Heart left ventricle (tissue), 16 donors: ENCODE measurements at regions of chr13 and their contacts with region 1.

Region 1: GRCh38 chr13:32381539-32381938 is 46.4 kb downstream of the N4BP2L1 start:
- DNase-seq: no peak
- ATAC-seq: peak in 3 of 4 donors; percentile 54 to 62 (median 62)
- H3K4me3 ChIP-seq: no peak overlapping the region
- H3K27ac ChIP-seq: no peak overlapping the region
- H3K4me1 ChIP-seq: no peaks in the 10 kb centered on the region
- H3K27me3 ChIP-seq: no peaks in the 10 kb centered on the region
- CTCF ChIP-seq: peak; percentile 27 to 68 (median 57)
- POLR2A ChIP-seq: no peak

Region 2: GRCh38 chr13:32362574-32362973 is 19.0 kb before region 1 on chr13:
- intact Hi-C with region 1: no loop called
- DNase-seq: no peak
- ATAC-seq: no peak
- H3K4me3 ChIP-seq: no peak overlapping the region
- H3K27ac ChIP-seq: no peak overlapping the region
- H3K4me1 ChIP-seq: no peaks in the 10 kb centered on the region
- H3K27me3 ChIP-seq: no peaks in the 10 kb centered on the region
- CTCF ChIP-seq: no peak
- POLR2A ChIP-seq: no peak

Region 3: DNA sequence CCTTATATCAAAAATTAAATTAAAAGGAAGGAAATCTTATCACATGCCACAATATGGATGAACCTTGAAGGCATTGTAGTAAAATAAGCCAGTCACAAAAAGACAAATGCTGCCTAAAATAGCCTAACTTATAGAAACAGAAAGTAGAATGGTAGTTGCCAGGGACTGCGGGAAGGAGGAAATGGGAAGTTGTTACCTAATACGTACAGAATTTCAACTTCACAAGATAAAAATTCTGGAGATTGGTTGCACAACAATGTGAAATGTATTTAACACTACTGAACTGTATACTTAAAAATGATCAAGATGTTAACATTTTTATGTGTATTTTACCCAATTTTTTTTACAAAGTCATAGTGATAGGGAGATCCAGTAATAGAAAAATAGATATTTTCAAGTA is 167.3 kb after region 1 on chr13:
- intact Hi-C with region 1: loop called in 1 of 10 experiments (anchors 10 kb)
- DNase-seq: no peak
- ATAC-seq: no peak
- H3K4me3 ChIP-seq: no peak overlapping the region
- H3K27ac ChIP-seq: peak overlapping the region in 1 of 12 donors; percentile 12
- H3K4me1 ChIP-seq: peaks cover 0 to 6% (median 0%) of the 10 kb centered on the region in 12 donors
- H3K27me3 ChIP-seq: no peaks in the 10 kb centered on the region
- CTCF ChIP-seq: no peak
- POLR2A ChIP-seq: no peak

Region 4: GRCh38 chr13:32581177-32581786 is 199.7 kb after region 1 on chr13:
- intact Hi-C with region 1: loop called (anchors 1 to 5 kb)
- DNase-seq: no peak
- ATAC-seq: no peak
- H3K4me3 ChIP-seq: no peak overlapping the region
- H3K27ac ChIP-seq: no peak overlapping the region
- H3K4me1 ChIP-seq: peaks cover 0 to 7% (median 4%) of the 10 kb centered on the region in 12 donors
- H3K27me3 ChIP-seq: no peaks in the 10 kb centered on the region
- CTCF ChIP-seq: peak; percentile 27 to 71 (median 60)
- POLR2A ChIP-seq: no peak

Region 5: DNA sequence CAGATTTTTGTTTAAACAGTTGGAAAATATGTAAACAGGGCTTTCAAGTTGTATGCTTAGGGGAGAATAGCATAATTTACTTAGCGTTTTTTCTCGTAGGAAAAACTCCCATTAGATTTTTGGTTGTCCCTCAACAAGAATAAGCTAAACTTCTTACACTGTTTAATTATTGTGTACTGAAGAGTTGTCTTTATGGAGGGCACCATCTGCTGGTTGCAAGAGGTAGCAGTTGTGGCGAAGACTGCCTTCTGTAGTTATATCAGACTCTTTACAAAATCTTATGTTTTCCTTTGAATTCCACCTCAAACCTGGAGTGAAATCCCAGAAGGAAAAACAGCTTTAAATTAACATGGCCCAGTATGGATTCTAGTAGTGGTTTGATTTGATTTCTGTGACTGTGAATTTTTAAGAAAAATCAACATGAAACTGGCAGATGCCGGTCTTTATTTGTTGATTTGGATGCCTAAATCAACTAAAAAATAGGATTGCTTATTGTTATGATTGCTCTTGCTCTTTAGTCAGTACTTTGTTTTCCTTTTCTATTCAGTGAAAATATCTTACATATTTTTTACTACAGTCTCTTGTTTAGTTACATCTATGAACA is 258.1 kb after region 1 on chr13:
- intact Hi-C with region 1: loop called in 4 of 10 experiments (anchors 5 to 10 kb)
- DNase-seq: peak in 4 of 5 donors; percentile 43 to 58 (median 48)
- ATAC-seq: peak in 3 of 4 donors; percentile 80 to 91 (median 86)
- H3K4me3 ChIP-seq: no peak overlapping the region
- H3K27ac ChIP-seq: no peak overlapping the region
- H3K4me1 ChIP-seq: peaks cover 0 to 42% (median 9%) of the 10 kb centered on the region in 12 donors
- H3K27me3 ChIP-seq: no peaks in the 10 kb centered on the region
- CTCF ChIP-seq: peak; percentile 69 to 91 (median 82)
- POLR2A ChIP-seq: no peak

Region 6: GRCh38 chr13:33401238-33401637 is 1019.7 kb after region 1 on chr13:
- intact Hi-C with region 1: no loop called
- DNase-seq: peak in 4 of 5 donors; percentile 37 to 65 (median 51)
- ATAC-seq: peak; percentile 53 to 86 (median 80)
- H3K4me3 ChIP-seq: no peak overlapping the region
- H3K27ac ChIP-seq: peak overlapping the region in 3 of 12 donors; percentile 0 to 63 (median 3)
- H3K4me1 ChIP-seq: peaks cover 0 to 18% (median 6%) of the 10 kb centered on the region in 12 donors
- H3K27me3 ChIP-seq: no peaks in the 10 kb centered on the region
- CTCF ChIP-seq: no peak
- POLR2A ChIP-seq: no peak